Activated CD8-positive, alpha-beta memory T cell treated with anti-CD3 and anti-CD28 coated beads, Interleukin-2, amount 10 ng/mL, durations not matched to agents 7 days and 5 days (primary cell): ENCODE measurements at regions of chr17 and their contacts with region 1.

Region 1: DNA sequence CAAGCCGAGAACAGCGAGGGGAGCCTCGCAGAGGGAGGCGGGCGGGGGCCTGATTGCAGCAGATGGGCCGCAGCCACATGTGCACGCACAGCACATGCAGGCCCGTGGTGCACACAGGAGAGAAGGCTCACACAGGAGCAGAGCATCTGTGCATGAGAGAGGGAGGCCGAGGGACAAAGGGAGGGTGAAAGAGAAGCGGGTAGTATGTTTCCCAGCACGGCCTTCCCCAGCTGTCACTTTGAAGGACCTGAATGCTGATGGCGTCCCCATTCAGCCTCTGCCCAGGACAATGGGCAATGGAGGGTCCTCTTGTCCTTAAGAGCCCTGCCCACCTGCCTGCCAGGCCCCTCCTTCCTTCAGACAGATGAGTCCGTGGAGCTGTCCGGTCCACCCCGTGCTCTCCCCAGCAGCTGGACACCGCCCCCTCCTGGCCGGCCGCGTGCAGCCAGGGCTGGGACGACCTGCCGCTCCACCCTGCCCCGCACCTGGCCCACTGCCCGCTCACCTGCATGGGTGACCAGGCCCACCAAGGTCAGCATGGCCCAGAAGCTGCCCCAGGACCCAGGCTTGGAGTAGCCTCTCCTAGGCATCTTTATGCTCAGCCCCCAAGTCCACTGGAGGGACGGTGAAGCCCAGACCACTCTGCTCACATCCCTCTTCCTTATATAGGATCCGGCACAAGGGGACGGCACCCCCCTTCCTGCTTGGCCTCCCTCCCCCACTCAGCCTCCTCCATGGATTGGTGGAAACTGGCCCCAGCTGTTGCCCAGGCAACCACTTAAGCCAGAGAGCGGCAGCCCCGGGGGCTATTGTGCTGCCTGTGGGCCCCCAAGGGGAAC is at the start of gene BTBD17:
- DNase-seq: peak; percentile 61
- ATAC-seq: peak; percentile 69
- H3K4me3 Mint-ChIP-seq: no peak within 1 kb of the TSS
- H3K27ac Mint-ChIP-seq: no peak within 1 kb of the TSS
- H3K4me1 Mint-ChIP-seq: peaks cover 3% of the 10 kb centered on the region
- H3K27me3 Mint-ChIP-seq: peaks cover 32% of the 10 kb centered on the region
- total RNA-seq, gene BTBD17: not detected

Region 2: DNA sequence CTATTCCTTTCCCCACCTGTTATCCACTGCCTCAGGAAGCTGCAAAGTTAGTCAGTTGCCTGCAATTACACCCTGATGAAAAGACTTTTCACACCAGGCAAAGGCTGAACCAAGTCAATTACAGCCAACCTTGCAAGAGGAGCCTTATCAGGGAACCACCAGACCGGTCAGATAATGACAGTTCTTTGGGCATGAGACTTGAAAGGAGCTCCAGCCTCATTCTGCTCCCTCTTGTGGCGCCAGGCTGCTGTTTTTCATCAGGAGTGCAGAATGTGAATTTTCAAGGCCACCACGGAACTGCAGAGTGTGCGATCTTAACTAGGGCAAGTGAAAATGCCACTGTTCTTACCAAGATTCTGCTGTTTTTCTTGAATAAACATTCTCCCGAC is 64.9 kb before region 1 on chr17:
- CTCF ChIA-PET with region 1: interaction called, 37 read pairs
- DNase-seq: peak; percentile 64
- ATAC-seq: no peak
- H3K4me3 Mint-ChIP-seq: no peak overlapping the region
- H3K27ac Mint-ChIP-seq: no peak overlapping the region
- H3K4me1 Mint-ChIP-seq: peaks cover 23% of the 10 kb centered on the region
- H3K27me3 Mint-ChIP-seq: peaks cover 3% of the 10 kb centered on the region

Region 3: DNA sequence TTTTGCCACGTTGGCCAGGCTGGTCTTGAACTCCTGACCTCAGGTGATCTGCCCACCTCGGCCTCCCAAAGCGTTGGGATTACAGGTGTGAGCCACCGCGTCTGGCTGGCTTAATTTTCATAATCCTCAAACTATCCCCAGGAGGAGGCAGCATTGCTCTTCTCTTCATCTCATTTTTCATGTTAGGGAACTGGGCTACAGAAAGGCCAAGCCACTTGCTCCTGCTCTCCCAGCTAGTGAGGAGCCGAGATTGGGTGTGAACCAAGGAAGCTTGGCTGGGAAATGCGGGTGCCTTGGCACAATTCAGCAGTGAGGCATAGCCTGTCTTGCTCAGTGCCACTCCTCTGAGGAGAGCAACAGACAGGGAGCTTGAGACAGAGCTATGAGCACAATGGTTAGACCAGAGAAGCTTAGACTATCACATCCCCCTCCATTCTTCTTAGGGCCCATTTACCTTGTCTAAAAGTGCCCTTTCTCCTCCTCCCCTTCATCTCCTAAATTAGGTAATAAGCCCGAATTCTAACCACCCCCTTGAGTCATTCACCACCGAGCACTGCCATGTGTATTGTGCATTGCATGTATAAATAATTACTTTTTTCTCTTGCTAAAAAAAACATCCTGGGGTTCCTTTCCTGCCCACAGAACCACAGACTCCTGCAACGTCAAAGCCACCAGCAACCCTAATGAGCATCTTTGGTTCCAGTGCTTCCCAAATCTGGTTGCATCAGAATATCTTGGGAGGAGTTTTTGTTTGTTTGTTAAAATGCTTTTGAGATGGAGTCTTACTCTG is 55.4 kb before region 1 on chr17:
- CTCF ChIA-PET with region 1: interaction called, 37 read pairs
- DNase-seq: no peak
- ATAC-seq: peak; percentile 46
- H3K4me3 Mint-ChIP-seq: no peak overlapping the region
- H3K27ac Mint-ChIP-seq: no peak overlapping the region
- H3K4me1 Mint-ChIP-seq: peaks cover 18% of the 10 kb centered on the region
- H3K27me3 Mint-ChIP-seq: peaks cover 4% of the 10 kb centered on the region